CD4-positive, alpha-beta T cell (primary cell): ENCODE measurements at regions of chr1 and their contacts with region 1.

Region 1: DNA sequence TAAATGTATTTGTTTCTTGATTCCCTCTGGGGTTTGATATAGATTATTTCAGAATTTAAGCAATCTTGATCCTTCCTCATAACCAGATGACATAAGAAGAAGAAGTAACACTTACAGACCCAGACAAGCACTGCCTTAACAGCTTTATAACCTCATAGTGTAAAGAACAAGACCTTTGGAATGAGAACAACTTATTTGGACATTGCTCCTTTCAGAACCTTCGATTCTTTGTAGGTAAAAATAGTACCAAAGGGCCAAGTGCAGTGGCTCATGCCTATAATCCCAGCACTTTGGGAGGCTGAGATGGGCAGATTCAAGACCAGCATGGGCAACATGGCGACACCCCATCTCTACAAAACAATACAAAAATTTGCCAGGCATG is 15.0 kb downstream of the TM2D1 start:
- DNase-seq: no peak
- ATAC-seq: no peak
- H3K4me3 ChIP-seq: no peak overlapping the region
- H3K4me3 Mint-ChIP-seq: no peak overlapping the region
- H3K27ac ChIP-seq: no peak overlapping the region
- H3K27ac Mint-ChIP-seq: no peak overlapping the region
- H3K4me1 ChIP-seq: no peaks in the 10 kb centered on the region
- H3K4me1 Mint-ChIP-seq: peaks cover 14% of the 10 kb centered on the region
- H3K27me3 ChIP-seq: no peaks in the 10 kb centered on the region
- H3K27me3 Mint-ChIP-seq: no peaks in the 10 kb centered on the region
- CTCF ChIP-seq: no peak

Region 2: DNA sequence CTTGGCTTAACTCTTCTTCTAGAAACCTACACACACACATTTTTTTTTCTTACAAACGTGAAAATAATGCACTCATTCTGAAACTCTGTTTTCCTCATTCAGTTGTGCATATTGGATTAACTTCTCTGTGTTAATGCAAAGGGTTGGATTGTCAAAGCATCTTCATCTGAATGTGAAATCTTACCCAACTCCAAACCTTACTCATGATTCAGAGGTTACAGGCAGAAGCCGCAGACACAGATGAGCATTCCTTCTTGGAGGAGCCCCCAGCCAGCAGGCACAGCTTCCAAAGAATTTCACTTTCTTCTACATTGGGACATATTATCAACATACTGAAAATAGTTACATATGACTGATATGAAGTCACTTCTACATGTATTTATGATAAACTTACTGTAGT is 48.0 kb after region 1 on chr1:
- CTCF ChIA-PET with region 1: no interaction called
- POLR2A ChIA-PET with region 1: no interaction called
- intact Hi-C with region 1: loop called in 1 of 2 experiments (anchors 5 kb)
- DNase-seq: no peak
- ATAC-seq: no peak
- H3K4me3 ChIP-seq: no peak overlapping the region
- H3K4me3 Mint-ChIP-seq: no peak overlapping the region
- H3K27ac ChIP-seq: no peak overlapping the region
- H3K27ac Mint-ChIP-seq: no peak overlapping the region
- H3K4me1 ChIP-seq: no peaks in the 10 kb centered on the region
- H3K4me1 Mint-ChIP-seq: peaks cover 16% of the 10 kb centered on the region
- H3K27me3 ChIP-seq: no peaks in the 10 kb centered on the region
- H3K27me3 Mint-ChIP-seq: no peaks in the 10 kb centered on the region
- CTCF ChIP-seq: no peak